Activated CD8-positive, alpha-beta T cell treated with anti-CD3 and anti-CD28 coated beads, Interleukin-2, amount 10 ng/mL, durations not matched to agents 7 days and 5 days (primary cell): ENCODE measurements at regions of chr6 and their contacts with region 1.

Region 1: GRCh38 chr6:20126789-20127653 is 85.2 kb downstream of the MBOAT1 start:
- DNase-seq: peak; percentile 69
- ATAC-seq: peak; percentile 87
- H3K4me3 Mint-ChIP-seq: no peak overlapping the region
- H3K27ac Mint-ChIP-seq: no peak overlapping the region
- H3K4me1 Mint-ChIP-seq: peaks cover 4% of the 10 kb centered on the region
- H3K27me3 Mint-ChIP-seq: no peaks in the 10 kb centered on the region

Region 2: DNA sequence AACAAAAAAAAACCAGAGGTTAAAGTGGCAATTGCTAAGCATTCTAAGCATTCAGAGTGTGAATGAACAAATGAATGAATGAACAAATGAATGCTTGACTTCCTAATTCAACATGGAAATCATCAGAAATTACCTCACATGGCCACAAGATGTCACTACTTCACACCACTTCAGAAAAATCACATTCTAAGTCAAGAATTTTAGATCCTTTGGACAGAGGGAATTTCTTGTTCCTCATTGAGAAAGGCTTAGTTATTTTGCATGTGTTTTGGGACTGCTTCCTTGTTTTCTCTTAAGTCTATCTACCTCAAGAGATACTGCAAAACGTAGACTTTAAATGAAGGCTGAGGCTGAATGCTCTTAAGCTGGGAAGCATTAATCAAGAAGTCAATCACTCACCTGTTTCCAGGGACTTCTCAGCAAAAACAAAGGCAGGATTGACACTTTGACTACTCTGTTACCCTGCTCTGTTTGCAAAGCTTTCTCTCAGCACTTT is 34.9 kb before region 1 on chr6:
- CTCF ChIA-PET with region 1: interaction called, 39 read pairs
- POLR2A ChIA-PET with region 1: no interaction called
- DNase-seq: no peak
- ATAC-seq: no peak
- H3K4me3 Mint-ChIP-seq: no peak overlapping the region
- H3K27ac Mint-ChIP-seq: no peak overlapping the region
- H3K4me1 Mint-ChIP-seq: no peaks in the 10 kb centered on the region
- H3K27me3 Mint-ChIP-seq: peaks cover 2% of the 10 kb centered on the region

Region 3: DNA sequence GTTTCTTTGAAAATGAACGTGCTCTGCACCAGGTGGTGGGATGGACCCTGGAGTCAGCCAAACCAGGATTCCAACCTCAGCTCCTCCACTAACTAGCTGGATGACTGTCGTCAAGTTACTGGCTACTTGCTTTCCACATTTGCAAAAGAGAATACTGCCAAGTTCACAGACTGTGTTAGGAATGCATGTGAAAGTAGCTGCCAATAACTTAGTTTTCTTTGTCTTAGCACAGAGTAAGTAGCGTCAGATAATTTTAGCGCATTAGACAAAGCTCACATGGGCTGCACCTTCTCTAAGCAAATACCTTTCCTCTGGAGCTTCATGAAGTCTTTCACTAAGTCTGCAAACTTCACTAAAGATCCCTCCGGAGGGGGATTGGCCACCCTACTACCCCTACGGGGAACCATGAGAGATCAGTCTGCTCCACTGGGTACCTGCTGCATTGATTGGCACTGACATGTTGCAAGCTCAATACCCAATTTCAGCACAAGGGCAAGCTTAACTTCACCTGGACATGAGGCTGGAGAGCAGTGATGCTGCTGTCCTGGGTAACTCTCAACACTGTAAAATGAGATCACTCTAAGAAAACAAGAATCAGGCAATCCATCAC is 28.6 kb before region 1 on chr6:
- CTCF ChIA-PET with region 1: interaction called, 39 read pairs
- POLR2A ChIA-PET with region 1: no interaction called
- DNase-seq: no peak
- ATAC-seq: no peak
- H3K4me3 Mint-ChIP-seq: no peak overlapping the region
- H3K27ac Mint-ChIP-seq: no peak overlapping the region
- H3K4me1 Mint-ChIP-seq: no peaks in the 10 kb centered on the region
- H3K27me3 Mint-ChIP-seq: no peaks in the 10 kb centered on the region

Region 4: GRCh38 chr6:20109526-20109925 is 17.5 kb before region 1 on chr6:
- CTCF ChIA-PET with region 1: interaction called, 44 read pairs
- POLR2A ChIA-PET with region 1: no interaction called
- DNase-seq: no peak
- ATAC-seq: no peak
- H3K4me3 Mint-ChIP-seq: no peak overlapping the region
- H3K27ac Mint-ChIP-seq: peak overlapping the region; percentile 23
- H3K4me1 Mint-ChIP-seq: peaks cover 7% of the 10 kb centered on the region
- H3K27me3 Mint-ChIP-seq: no peaks in the 10 kb centered on the region

Region 5: GRCh38 chr6:20148433-20148832 is 21.4 kb after region 1 on chr6:
- CTCF ChIA-PET with region 1: interaction called, 10 read pairs
- POLR2A ChIA-PET with region 1: no interaction called
- DNase-seq: no peak
- ATAC-seq: no peak
- H3K4me3 Mint-ChIP-seq: no peak overlapping the region
- H3K27ac Mint-ChIP-seq: no peak overlapping the region
- H3K4me1 Mint-ChIP-seq: no peaks in the 10 kb centered on the region
- H3K27me3 Mint-ChIP-seq: no peaks in the 10 kb centered on the region

Region 6: DNA sequence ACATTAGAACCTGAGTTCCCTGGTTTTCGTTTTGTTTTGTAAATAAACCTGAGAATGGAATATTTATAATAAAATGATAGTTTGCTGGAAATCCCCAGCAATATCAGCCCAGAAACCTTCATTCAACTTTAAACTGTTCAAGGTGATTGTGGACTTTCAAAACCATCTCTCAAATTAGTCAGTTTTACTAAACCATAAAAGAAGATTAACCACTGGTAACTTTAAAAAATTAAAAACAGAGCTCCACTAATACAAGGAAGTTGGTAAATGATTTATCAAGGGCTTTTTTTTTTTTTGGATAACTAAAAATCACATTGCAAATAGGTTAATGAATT is 75.3 kb after region 1 on chr6:
- CTCF ChIA-PET with region 1: interaction called, 14 read pairs
- POLR2A ChIA-PET with region 1: no interaction called
- DNase-seq: no peak
- ATAC-seq: no peak
- H3K4me3 Mint-ChIP-seq: no peak overlapping the region
- H3K27ac Mint-ChIP-seq: no peak overlapping the region
- H3K4me1 Mint-ChIP-seq: peaks cover 50% of the 10 kb centered on the region
- H3K27me3 Mint-ChIP-seq: no peaks in the 10 kb centered on the region

Region 7: DNA sequence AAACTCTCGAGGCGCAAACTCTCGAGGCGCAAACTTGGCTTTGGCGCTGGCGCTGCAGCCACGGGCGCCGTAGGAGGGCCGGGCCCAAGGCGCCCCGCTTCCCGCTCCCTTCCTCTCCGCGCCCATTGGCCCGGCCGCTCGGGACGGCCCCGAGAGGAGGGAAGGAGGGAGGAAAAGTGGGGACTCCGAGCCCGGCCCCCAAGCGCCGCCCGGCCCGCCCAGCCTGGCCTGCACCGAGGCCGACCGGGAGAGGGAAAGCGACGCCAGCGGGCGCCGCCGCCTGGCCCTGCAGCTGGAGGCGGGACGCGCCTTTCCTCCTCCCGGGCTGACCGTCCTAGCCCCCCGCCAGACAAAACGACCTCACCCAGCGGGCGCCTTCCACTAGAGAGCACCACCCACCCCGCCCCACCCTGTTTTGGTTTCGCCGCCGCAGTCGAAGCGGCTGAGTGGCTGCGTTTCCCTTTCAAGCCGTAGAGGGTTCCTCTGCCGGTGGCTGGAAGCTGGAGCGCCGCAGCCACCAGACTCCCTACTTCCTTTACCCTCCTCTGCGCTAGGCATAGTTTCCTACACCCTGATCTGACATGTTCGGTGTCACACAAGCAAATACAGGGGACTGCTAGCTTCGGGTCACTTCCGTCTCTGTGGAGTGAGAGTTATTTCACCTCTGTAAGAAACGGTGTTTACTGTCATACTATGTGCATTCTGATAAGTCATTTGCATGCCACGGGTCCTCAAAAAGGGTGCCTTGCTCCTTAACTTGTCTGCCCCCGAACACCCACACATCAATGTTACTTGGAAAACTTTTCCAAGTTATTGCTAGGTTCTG is 85.6 kb after region 1 on chr6 and contains the start of gene MBOAT1:
- CTCF ChIA-PET with region 1: interaction called, 13 read pairs
- POLR2A ChIA-PET with region 1: no interaction called
- DNase-seq: peak; percentile 80
- ATAC-seq: peak; percentile 91
- H3K4me3 Mint-ChIP-seq: peak within 1 kb of the TSS; percentile 89
- H3K27ac Mint-ChIP-seq: peak within 1 kb of the TSS; percentile 98
- H3K4me1 Mint-ChIP-seq: peaks cover 36% of the 10 kb centered on the region
- H3K27me3 Mint-ChIP-seq: peaks cover 6% of the 10 kb centered on the region
- total RNA-seq, gene MBOAT1: 14.2 to 15.5 TPM